ENCODE measurements at regions of chr16 and their contacts with region 1.

Region 1: GRCh38 chr16:50152807-50153452 is at the start of gene TENT4B:
- DNase-seq: peak; percentile 75 to 87 (median 84)
- H3K4me3 ChIP-seq: peak within 1 kb of the TSS; percentile 75 to 97 (median 96)
- H3K4me3 Mint-ChIP-seq: peak within 1 kb of the TSS; percentile 93 to 94
- H3K27ac ChIP-seq: peak within 1 kb of the TSS; percentile 61 to 89
- H3K27ac Mint-ChIP-seq: peak within 1 kb of the TSS; percentile 68 to 95 (median 88)
- H3K4me1 ChIP-seq: peaks cover 30 to 38% of the 10 kb centered on the region in 2 donors
- H3K4me1 Mint-ChIP-seq: peaks cover 35% of the 10 kb centered on the region
- H3K27me3 ChIP-seq: no peaks in the 10 kb centered on the region
- H3K27me3 Mint-ChIP-seq: no peaks in the 10 kb centered on the region
- CTCF ChIP-seq: no peak
- polyA plus RNA-seq, gene TENT4B: 1.4 to 9.0 (median 1.7) TPM

Region 2: GRCh38 chr16:50024684-50025536 is 128.0 kb before region 1 on chr16 and contains the start of gene CNEP1R1:
- intact Hi-C with region 1: loop called (anchors 5 kb)
- DNase-seq: peak; percentile 96 to 97 (median 96)
- H3K4me3 ChIP-seq: peak within 1 kb of the TSS; percentile 65 to 95 (median 92)
- H3K4me3 Mint-ChIP-seq: peak within 1 kb of the TSS; percentile 94 to 98
- H3K27ac ChIP-seq: peak within 1 kb of the TSS; percentile 43 to 87
- H3K27ac Mint-ChIP-seq: peak within 1 kb of the TSS; percentile 81 to 94 (median 91)
- H3K4me1 ChIP-seq: peaks cover 12 to 24% of the 10 kb centered on the region in 2 donors
- H3K4me1 Mint-ChIP-seq: peaks cover 31% of the 10 kb centered on the region
- H3K27me3 ChIP-seq: no peaks in the 10 kb centered on the region
- H3K27me3 Mint-ChIP-seq: peaks cover 0 to 5% (median 0%) of the 10 kb centered on the region in 3 donors
- CTCF ChIP-seq: peak; percentile 99
- polyA plus RNA-seq, gene CNEP1R1: 13.7 to 49.6 (median 19.3) TPM

Region 3: DNA sequence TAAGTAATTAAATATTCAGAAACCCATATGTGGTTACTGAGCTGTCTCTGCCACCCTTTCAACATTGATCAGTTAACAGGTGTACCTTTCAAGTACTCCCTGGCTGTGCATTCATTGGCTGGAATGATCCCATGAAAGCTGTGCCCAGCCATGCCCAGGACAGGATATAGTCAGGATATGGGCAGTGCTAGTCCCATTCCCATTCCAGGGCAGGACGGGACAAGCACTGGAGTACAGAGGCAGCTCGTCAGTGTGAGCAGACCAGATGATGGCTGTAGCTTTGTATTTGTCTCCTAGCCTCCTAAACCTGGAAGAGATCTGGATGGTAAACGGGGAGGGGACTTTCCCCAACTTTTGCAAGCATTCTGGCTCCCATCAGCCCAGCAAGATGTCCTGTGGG is 64.6 kb before region 1 on chr16:
- intact Hi-C with region 1: loop called (anchors 5 kb)
- DNase-seq: no peak
- H3K4me3 ChIP-seq: no peak overlapping the region
- H3K4me3 Mint-ChIP-seq: no peak overlapping the region
- H3K27ac ChIP-seq: peak overlapping the region in 1 of 2 donors; percentile 70
- H3K27ac Mint-ChIP-seq: peak overlapping the region in 2 of 7 donors; percentile 40 to 70
- H3K4me1 ChIP-seq: peaks cover 6% of the 10 kb centered on the region in 2 donors
- H3K4me1 Mint-ChIP-seq: peaks cover 8% of the 10 kb centered on the region
- H3K27me3 ChIP-seq: no peaks in the 10 kb centered on the region
- H3K27me3 Mint-ChIP-seq: peaks cover 0 to 2% (median 0%) of the 10 kb centered on the region in 3 donors
- CTCF ChIP-seq: no peak

Region 4: GRCh38 chr16:50102051-50102746 is 50.7 kb before region 1 on chr16:
- intact Hi-C with region 1: loop called in 1 of 2 experiments (anchors 5 kb)
- DNase-seq: peak; percentile 47 to 67 (median 66)
- H3K4me3 ChIP-seq: no peak overlapping the region
- H3K4me3 Mint-ChIP-seq: no peak overlapping the region
- H3K27ac ChIP-seq: peak overlapping the region in 1 of 2 donors; percentile 86
- H3K27ac Mint-ChIP-seq: peak overlapping the region; percentile 60 to 96 (median 84)
- H3K4me1 ChIP-seq: peaks cover 4 to 17% of the 10 kb centered on the region in 2 donors
- H3K4me1 Mint-ChIP-seq: peaks cover 15% of the 10 kb centered on the region
- H3K27me3 ChIP-seq: no peaks in the 10 kb centered on the region
- H3K27me3 Mint-ChIP-seq: no peaks in the 10 kb centered on the region
- CTCF ChIP-seq: no peak

Region 5: GRCh38 chr16:50245417-50246298 is 92.7 kb after region 1 on chr16:
- intact Hi-C with region 1: no loop called
- DNase-seq: peak; percentile 48 to 68 (median 50)
- H3K4me3 ChIP-seq: peak overlapping the region; percentile 81 to 88 (median 87)
- H3K4me3 Mint-ChIP-seq: peak overlapping the region; percentile 76 to 84
- H3K27ac ChIP-seq: no peak overlapping the region
- H3K27ac Mint-ChIP-seq: peak overlapping the region in 5 of 7 donors; percentile 4 to 61 (median 53)
- H3K4me1 ChIP-seq: peaks cover 32 to 57% of the 10 kb centered on the region in 2 donors
- H3K4me1 Mint-ChIP-seq: peaks cover 46% of the 10 kb centered on the region
- H3K27me3 ChIP-seq: no peaks in the 10 kb centered on the region
- H3K27me3 Mint-ChIP-seq: peaks cover 0 to 3% (median 3%) of the 10 kb centered on the region in 3 donors
- CTCF ChIP-seq: peak; percentile 50

Region 6: DNA sequence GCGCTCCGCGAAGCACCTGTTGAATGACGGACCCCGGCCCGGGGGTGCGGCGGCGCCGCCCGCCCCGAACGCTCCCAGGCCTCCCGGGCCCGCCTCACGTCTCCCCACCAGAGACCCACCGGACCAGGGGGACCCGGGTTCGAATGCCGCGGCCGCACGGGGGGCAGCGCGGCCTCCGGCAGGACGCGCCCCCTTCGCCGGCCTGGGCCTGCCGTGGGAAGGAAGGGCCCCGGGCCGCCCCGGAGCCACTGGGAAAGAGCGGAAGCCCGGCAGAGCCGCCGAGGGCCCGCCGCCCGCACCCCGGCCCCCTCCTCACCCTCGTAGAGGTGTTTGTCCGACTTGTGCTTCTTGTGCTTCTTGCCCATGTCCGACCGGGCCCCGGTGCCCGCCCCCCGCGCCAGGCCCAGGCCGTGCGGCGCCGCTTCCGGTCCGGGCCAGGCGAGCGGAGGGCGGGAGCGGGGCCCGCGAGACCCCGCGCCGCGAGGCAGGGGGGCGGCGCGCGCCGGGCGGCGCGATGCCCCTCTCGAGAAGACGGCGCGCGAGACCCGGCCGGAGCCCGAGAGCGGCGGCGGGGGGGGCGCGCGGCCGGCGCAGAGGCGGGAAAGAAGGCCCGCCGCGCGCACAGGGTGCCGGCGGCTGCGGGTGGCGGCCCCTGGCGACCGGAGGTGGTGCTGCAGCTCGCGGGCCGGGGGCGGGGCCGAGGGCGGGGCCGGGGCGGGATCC is 215.6 kb after region 1 on chr16 and contains the start of gene BRD7:
- intact Hi-C with region 1: loop called in 1 of 2 experiments (anchors 10 kb)
- DNase-seq: peak; percentile 34 to 59 (median 44)
- H3K4me3 ChIP-seq: peak within 1 kb of the TSS; percentile 49 to 95 (median 85)
- H3K4me3 Mint-ChIP-seq: peak within 1 kb of the TSS; percentile 89 to 92
- H3K27ac ChIP-seq: peak within 1 kb of the TSS in 1 of 2 donors; percentile 69
- H3K27ac Mint-ChIP-seq: peak within 1 kb of the TSS; percentile 74 to 95 (median 86)
- H3K4me1 ChIP-seq: peaks cover 32 to 34% of the 10 kb centered on the region in 2 donors
- H3K4me1 Mint-ChIP-seq: peaks cover 37% of the 10 kb centered on the region
- H3K27me3 ChIP-seq: no peaks in the 10 kb centered on the region
- H3K27me3 Mint-ChIP-seq: peaks cover 1 to 6% (median 3%) of the 10 kb centered on the region in 3 donors
- CTCF ChIP-seq: no peak
- polyA plus RNA-seq, gene BRD7: 11.4 to 33.0 (median 21.2) TPM

Region 7: GRCh38 chr16:50464325-50465290 is 311.7 kb after region 1 on chr16:
- intact Hi-C with region 1: no loop called
- DNase-seq: no peak
- H3K4me3 ChIP-seq: no peak overlapping the region
- H3K4me3 Mint-ChIP-seq: no peak overlapping the region
- H3K27ac ChIP-seq: no peak overlapping the region
- H3K27ac Mint-ChIP-seq: no peak overlapping the region
- H3K4me1 ChIP-seq: no peaks in the 10 kb centered on the region
- H3K4me1 Mint-ChIP-seq: no peaks in the 10 kb centered on the region
- H3K27me3 ChIP-seq: peaks cover 8 to 36% of the 10 kb centered on the region in 2 donors
- H3K27me3 Mint-ChIP-seq: peaks cover 37 to 44% (median 37%) of the 10 kb centered on the region in 3 donors
- CTCF ChIP-seq: no peak

Measured in CD14-positive monocyte (primary cell).